GM13976 (cell line): ENCODE measurements at regions of chr18 and their contacts with region 1.

Region 1: DNA sequence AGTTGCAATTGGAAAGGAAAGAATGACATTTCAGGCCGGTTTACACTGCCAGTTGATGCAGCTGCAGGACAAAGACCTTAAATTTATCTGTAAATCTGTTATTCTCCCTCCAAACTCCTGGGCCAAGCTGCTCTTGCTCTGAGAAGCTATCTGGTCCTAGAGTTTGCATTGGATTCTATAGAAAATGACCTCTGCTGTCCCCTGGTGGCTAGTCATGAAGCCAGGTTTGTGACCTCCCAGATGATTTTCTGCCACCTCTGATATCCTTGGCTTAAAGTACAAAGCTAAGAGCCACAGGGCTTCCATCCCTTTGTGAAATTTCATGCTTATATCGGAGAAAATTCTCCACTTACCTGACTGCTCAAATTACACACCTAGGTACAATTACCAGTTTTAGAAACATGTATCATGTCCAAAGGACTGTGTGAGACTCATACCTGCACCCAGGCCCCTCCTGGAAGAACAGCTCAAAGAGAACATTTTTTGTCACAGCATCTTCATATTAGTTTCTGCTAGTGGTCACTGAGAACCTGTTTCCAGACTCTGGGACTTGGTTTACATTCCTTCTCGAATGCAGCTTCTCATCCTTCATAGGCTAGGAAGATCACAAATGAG is 28.9 kb upstream of the IER3IP1 start:
- DNase-seq: peak; percentile 31
- CTCF ChIP-seq: peak; percentile 74

Region 2: DNA sequence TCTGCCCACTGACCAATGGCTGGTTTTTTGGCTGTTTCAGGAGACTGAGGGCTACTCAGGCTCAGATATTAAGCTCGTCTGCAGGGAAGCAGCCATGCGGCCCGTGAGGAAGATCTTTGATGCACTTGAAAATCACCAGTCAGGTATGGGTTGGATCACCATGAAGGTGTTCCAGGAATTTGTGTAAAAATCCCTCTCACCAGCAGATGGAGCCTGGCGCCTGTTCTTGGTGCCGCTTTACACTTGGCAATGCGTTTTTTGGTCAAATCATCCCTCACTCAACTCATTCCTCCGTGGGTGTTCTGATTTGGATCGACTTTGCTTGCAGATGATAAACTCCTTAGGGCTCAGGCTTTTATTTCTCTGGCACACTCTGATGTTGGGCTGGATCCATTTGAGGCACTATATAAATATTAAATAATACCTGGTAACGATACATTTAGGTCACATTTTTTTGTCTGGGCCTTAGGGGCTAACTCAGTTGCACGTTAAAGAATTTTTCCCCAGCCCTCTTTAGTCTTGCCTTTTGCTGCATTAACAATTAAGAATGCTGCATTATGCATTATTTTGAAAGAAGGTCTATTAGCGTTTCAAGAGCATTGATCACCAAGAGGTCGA is 104.7 kb before region 1 on chr18:
- in situ Hi-C with region 1: loop called (anchors 10 kb)
- DNase-seq: peak; percentile 45
- CTCF ChIP-seq: peak; percentile 60